ENCODE measurements at regions of chr3 and their contacts with region 1.

Region 1: GRCh38 chr3:176799675-176800074 is 397.6 kb downstream of the TBL1XR1 start:
- DNase-seq: no peak
- CTCF ChIP-seq: no peak

Region 2: DNA sequence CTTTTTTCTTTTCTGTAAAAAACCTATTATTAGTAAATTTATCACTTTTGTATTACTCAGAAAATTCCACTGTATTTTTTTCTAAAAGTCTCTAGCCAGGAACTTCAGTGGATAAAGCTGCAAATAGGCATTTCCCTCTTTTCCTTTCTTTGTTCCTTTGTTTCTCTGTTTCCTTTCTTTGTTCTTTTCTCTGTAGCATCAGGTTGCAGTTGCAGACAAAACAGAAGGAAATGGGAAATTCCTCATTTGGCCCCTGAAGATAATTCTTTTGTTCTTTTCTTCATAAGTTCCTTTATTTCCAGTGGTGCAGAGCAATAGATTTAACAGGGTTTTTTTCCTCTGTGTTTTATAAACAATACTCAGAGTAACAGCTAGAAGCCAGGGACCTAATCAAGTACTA is 18.9 kb before region 1 on chr3:
- CTCF ChIA-PET with region 1: no interaction called
- POLR2A ChIA-PET with region 1: no interaction called
- DNase-seq: no peak
- CTCF ChIP-seq: no peak

Region 3: DNA sequence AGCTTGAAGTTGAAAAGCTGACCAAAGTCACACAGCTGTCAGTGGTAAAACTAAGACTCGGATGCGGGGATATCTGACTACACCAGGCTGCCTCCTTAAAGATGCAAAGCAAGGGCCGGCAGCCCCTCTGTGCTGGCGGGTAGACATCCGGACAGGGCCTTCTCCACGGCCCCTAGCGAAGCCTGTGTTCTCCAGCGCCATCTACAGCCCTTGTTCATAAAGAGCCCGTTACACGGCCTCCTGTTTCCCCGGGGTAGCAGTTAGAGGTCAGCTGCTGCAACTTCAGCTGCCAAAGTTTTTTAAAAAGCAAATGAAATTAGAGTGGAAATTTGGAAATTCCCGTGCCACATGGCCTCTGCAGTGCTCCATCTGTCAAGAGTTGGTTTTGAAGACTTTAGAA is 14.6 kb after region 1 on chr3:
- CTCF ChIA-PET with region 1: interaction called, 12 read pairs
- POLR2A ChIA-PET with region 1: no interaction called
- DNase-seq: peak; percentile 50
- CTCF ChIP-seq: peak; percentile 50

Region 4: GRCh38 chr3:176872771-176873209 is 73.1 kb after region 1 on chr3:
- CTCF ChIA-PET with region 1: no interaction called
- POLR2A ChIA-PET with region 1: no interaction called
- DNase-seq: peak; percentile 36
- CTCF ChIP-seq: peak; percentile 84

Measured in GM10248 (cell line).